Activated T-helper 2 cell treated with anti-CD3 and anti-CD28 coated beads, Interferon-gamma antibody, Interleukin-2, Interleukin-4, amounts not matched to agents 10 μg/mL and 5 μg/mL and 100 μg/mL, durations not matched to agents 14 hours and 24 hours and 36 hours (primary cell): ENCODE measurements at regions of chr11 and their contacts with region 1.

Region 1: GRCh38 chr11:78379039-78379670 is 38.5 kb downstream of the GAB2 start:
- DNase-seq: no peak
- H3K4me3 Mint-ChIP-seq: peak overlapping the region; percentile 56
- H3K27ac Mint-ChIP-seq: peak overlapping the region; percentile 78
- H3K4me1 Mint-ChIP-seq: peaks cover 56% of the 10 kb centered on the region
- H3K27me3 Mint-ChIP-seq: no peaks in the 10 kb centered on the region

Region 2: GRCh38 chr11:78168539-78169477 is 210.3 kb before region 1 on chr11:
- intact Hi-C with region 1: no loop called
- DNase-seq: no peak
- H3K4me3 Mint-ChIP-seq: no peak overlapping the region
- H3K27ac Mint-ChIP-seq: no peak overlapping the region
- H3K4me1 Mint-ChIP-seq: no peaks in the 10 kb centered on the region
- H3K27me3 Mint-ChIP-seq: no peaks in the 10 kb centered on the region

Region 3: DNA sequence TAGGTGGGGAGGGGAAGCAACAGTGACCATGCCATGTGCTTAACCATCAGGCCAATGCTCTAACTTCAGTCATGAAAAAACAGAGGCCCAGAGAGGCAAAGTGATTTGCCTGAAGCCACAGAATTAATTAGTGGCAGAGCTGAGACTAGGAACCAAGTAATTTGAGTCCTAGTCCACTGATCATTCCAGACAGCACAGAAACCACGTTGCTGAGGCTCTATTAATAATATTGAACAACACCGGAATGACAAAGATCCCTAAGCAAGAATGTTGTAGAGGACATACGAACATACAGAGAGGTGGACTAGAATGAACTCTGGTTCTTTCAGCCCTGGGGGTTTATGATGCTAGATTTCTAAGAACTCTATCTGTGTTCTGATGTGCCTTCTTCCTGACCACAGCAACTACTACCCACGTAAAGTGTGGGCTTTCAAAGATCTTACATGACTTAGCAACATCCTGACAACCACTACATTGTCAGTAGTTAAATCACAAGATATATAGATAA is 53.8 kb before region 1 on chr11:
- intact Hi-C with region 1: loop called (anchors 2 kb)
- DNase-seq: peak; percentile 41
- H3K4me3 Mint-ChIP-seq: peak overlapping the region; percentile 10
- H3K27ac Mint-ChIP-seq: peak overlapping the region; percentile 85
- H3K4me1 Mint-ChIP-seq: peaks cover 93% of the 10 kb centered on the region
- H3K27me3 Mint-ChIP-seq: no peaks in the 10 kb centered on the region

Region 4: GRCh38 chr11:78397387-78397786 is 18.2 kb after region 1 on chr11:
- intact Hi-C with region 1: loop called (anchors 2 kb)
- DNase-seq: no peak
- H3K4me3 Mint-ChIP-seq: no peak overlapping the region
- H3K27ac Mint-ChIP-seq: peak overlapping the region; percentile 51
- H3K4me1 Mint-ChIP-seq: peaks cover 69% of the 10 kb centered on the region
- H3K27me3 Mint-ChIP-seq: no peaks in the 10 kb centered on the region